CD4-positive, alpha-beta memory T cell (primary cell): ENCODE measurements at regions of chr1 and their contacts with region 1.

Region 1: GRCh38 chr1:114511032-114511785 is at the start of gene TRIM33:
- DNase-seq: peak; percentile 91 to 95 (median 94)
- H3K4me3 ChIP-seq: peak within 1 kb of the TSS; percentile 75 to 85
- H3K4me3 Mint-ChIP-seq: peak within 1 kb of the TSS; percentile 97 to 100 (median 98)
- H3K27ac ChIP-seq: peak within 1 kb of the TSS; percentile 96
- H3K27ac Mint-ChIP-seq: peak within 1 kb of the TSS; percentile 97 to 100 (median 100)
- H3K4me1 ChIP-seq: peaks cover 41% of the 10 kb centered on the region
- H3K4me1 Mint-ChIP-seq: peaks cover 38 to 55% (median 47%) of the 10 kb centered on the region in 4 donors
- H3K27me3 ChIP-seq: no peaks in the 10 kb centered on the region
- H3K27me3 Mint-ChIP-seq: no peaks in the 10 kb centered on the region
- total RNA-seq, gene TRIM33: 50.6 to 54.4 TPM

Region 2: DNA sequence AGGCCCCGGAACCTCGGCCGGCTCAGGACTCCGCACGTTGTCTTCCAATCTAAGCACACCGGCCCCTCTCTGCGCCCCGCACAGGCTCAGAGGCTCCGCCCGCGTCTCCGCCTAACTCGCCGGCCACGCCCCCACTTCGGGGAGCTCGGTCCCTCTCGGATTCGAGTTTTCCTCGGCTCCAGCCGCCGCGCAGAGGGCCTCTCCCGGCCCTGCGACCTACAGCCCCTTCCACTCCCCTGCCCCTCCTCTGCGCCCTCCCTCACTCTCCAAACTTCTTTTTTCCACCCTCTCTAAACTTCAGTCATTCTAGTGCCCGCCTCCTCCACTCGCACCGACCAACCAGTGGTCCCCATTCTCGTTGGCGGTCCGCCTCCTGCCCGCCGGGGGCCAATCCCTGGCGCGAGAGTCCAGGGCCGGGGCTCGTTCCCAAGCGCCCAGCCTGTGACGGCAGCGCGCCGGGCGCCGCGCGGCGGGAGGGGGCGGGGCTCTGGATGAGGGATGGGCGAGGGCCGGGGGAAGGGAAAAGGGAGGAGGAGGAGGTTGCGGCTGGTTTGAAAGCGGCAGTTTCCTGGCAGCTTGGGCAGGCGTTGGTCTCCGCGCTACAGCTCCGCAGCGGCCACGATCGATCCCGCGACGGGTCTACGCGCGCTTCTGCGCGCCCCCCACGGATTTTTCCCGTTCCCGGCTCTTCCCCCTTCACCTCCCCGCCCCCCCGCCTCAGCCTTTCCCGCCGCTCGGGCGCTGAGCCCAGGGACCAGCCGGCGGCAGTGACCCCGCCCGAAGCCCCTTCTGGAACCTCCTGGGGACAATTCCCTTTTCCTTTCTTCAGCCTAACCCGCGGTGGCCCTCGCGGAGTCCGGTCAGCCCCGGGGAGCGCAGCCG is 1121.0 kb before region 1 on chr1 and contains the start of gene MAGI3:
- CTCF ChIA-PET with region 1: no interaction called
- POLR2A ChIA-PET with region 1: no interaction called
- intact Hi-C with region 1: loop called (anchors 5 kb)
- DNase-seq: peak; percentile 92 to 94 (median 93)
- H3K4me3 ChIP-seq: peak within 1 kb of the TSS; percentile 44 to 89
- H3K4me3 Mint-ChIP-seq: peak within 1 kb of the TSS; percentile 88 to 98 (median 92)
- H3K27ac ChIP-seq: peak within 1 kb of the TSS; percentile 60
- H3K27ac Mint-ChIP-seq: peak within 1 kb of the TSS; percentile 80 to 95 (median 91)
- H3K4me1 ChIP-seq: peaks cover 30% of the 10 kb centered on the region
- H3K4me1 Mint-ChIP-seq: peaks cover 20 to 36% (median 23%) of the 10 kb centered on the region in 4 donors
- H3K27me3 ChIP-seq: no peaks in the 10 kb centered on the region
- H3K27me3 Mint-ChIP-seq: no peaks in the 10 kb centered on the region
- total RNA-seq, gene MAGI3: 6.5 to 6.7 TPM

Region 3: GRCh38 chr1:113904674-113905434 is 606.4 kb before region 1 on chr1 and contains the starts of genes AP4B1 and DCLRE1B:
- CTCF ChIA-PET with region 1: no interaction called
- POLR2A ChIA-PET with region 1: interaction called, 12 read pairs
- intact Hi-C with region 1: no loop called
- DNase-seq: peak; percentile 97 to 99 (median 98)
- H3K4me3 ChIP-seq: peak within 1 kb of the TSS; percentile 68 to 98
- H3K4me3 Mint-ChIP-seq: peak within 1 kb of the TSS; percentile 94 to 100 (median 99)
- H3K27ac ChIP-seq: peak within 1 kb of the TSS; percentile 96
- H3K27ac Mint-ChIP-seq: peak within 1 kb of the TSS; percentile 96 to 100 (median 100)
- H3K4me1 ChIP-seq: peaks cover 44% of the 10 kb centered on the region
- H3K4me1 Mint-ChIP-seq: peaks cover 36 to 74% (median 47%) of the 10 kb centered on the region in 4 donors
- H3K27me3 ChIP-seq: no peaks in the 10 kb centered on the region
- H3K27me3 Mint-ChIP-seq: no peaks in the 10 kb centered on the region
- total RNA-seq, gene AP4B1: 74.5 to 75.5 TPM
- total RNA-seq, gene DCLRE1B: 5.1 to 5.4 TPM

Region 4: DNA sequence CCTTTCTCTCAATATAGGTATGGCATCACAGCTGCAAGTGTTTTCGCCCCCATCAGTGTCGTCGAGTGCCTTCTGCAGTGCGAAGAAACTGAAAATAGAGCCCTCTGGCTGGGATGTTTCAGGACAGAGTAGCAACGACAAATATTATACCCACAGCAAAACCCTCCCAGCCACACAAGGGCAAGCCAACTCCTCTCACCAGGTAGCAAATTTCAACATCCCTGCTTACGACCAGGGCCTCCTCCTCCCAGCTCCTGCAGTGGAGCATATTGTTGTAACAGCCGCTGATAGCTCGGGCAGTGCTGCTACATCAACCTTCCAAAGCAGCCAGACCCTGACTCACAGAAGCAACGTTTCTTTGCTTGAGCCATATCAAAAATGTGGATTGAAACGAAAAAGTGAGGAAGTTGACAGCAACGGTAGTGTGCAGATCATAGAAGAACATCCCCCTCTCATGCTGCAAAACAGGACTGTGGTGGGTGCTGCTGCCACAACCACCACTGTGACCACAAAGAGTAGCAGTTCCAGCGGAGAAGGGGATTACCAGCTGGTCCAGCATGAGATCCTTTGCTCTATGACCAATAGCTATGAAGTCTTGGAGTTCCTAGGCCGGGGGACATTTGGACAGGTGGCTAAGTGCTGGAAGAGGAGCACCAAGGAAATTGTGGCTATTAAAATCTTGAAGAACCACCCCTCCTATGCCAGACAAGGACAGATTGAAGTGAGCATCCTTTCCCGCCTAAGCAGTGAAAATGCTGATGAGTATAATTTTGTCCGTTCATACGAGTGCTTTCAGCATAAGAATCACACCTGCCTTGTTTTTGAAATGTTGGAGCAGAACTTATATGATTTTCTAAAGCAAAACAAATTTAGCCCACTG is 570.6 kb before region 1 on chr1:
- CTCF ChIA-PET with region 1: no interaction called
- POLR2A ChIA-PET with region 1: no interaction called
- intact Hi-C with region 1: no loop called
- DNase-seq: peak; percentile 37 to 76 (median 47)
- H3K4me3 ChIP-seq: peak overlapping the region in 1 of 2 donors; percentile 35
- H3K4me3 Mint-ChIP-seq: peak overlapping the region; percentile 59 to 89 (median 82)
- H3K27ac ChIP-seq: peak overlapping the region; percentile 52
- H3K27ac Mint-ChIP-seq: peak overlapping the region; percentile 86 to 97 (median 91)
- H3K4me1 ChIP-seq: peaks cover 85% of the 10 kb centered on the region
- H3K4me1 Mint-ChIP-seq: peaks cover 56 to 85% (median 71%) of the 10 kb centered on the region in 4 donors
- H3K27me3 ChIP-seq: no peaks in the 10 kb centered on the region
- H3K27me3 Mint-ChIP-seq: no peaks in the 10 kb centered on the region

Region 5: GRCh38 chr1:114369927-114370326 is 141.3 kb before region 1 on chr1:
- CTCF ChIA-PET with region 1: no interaction called
- POLR2A ChIA-PET with region 1: no interaction called
- intact Hi-C with region 1: no loop called
- DNase-seq: no peak
- H3K4me3 ChIP-seq: no peak overlapping the region
- H3K4me3 Mint-ChIP-seq: no peak overlapping the region
- H3K27ac ChIP-seq: no peak overlapping the region
- H3K27ac Mint-ChIP-seq: no peak overlapping the region
- H3K4me1 ChIP-seq: no peaks in the 10 kb centered on the region
- H3K4me1 Mint-ChIP-seq: no peaks in the 10 kb centered on the region
- H3K27me3 ChIP-seq: no peaks in the 10 kb centered on the region
- H3K27me3 Mint-ChIP-seq: peaks cover 0 to 1% of the 10 kb centered on the region in 2 donors

Region 6: GRCh38 chr1:114482204-114482980 is 28.8 kb before region 1 on chr1:
- CTCF ChIA-PET with region 1: no interaction called
- POLR2A ChIA-PET with region 1: interaction called, 10 read pairs
- intact Hi-C with region 1: no loop called
- DNase-seq: peak in 4 of 5 donors; percentile 21 to 28 (median 26)
- H3K4me3 ChIP-seq: no peak overlapping the region
- H3K4me3 Mint-ChIP-seq: peak overlapping the region in 7 of 8 donors; percentile 15 to 72 (median 26)
- H3K27ac ChIP-seq: no peak overlapping the region
- H3K27ac Mint-ChIP-seq: peak overlapping the region; percentile 62 to 92 (median 82)
- H3K4me1 ChIP-seq: peaks cover 46% of the 10 kb centered on the region
- H3K4me1 Mint-ChIP-seq: peaks cover 41 to 68% (median 49%) of the 10 kb centered on the region in 4 donors
- H3K27me3 ChIP-seq: no peaks in the 10 kb centered on the region
- H3K27me3 Mint-ChIP-seq: no peaks in the 10 kb centered on the region

Region 7: DNA sequence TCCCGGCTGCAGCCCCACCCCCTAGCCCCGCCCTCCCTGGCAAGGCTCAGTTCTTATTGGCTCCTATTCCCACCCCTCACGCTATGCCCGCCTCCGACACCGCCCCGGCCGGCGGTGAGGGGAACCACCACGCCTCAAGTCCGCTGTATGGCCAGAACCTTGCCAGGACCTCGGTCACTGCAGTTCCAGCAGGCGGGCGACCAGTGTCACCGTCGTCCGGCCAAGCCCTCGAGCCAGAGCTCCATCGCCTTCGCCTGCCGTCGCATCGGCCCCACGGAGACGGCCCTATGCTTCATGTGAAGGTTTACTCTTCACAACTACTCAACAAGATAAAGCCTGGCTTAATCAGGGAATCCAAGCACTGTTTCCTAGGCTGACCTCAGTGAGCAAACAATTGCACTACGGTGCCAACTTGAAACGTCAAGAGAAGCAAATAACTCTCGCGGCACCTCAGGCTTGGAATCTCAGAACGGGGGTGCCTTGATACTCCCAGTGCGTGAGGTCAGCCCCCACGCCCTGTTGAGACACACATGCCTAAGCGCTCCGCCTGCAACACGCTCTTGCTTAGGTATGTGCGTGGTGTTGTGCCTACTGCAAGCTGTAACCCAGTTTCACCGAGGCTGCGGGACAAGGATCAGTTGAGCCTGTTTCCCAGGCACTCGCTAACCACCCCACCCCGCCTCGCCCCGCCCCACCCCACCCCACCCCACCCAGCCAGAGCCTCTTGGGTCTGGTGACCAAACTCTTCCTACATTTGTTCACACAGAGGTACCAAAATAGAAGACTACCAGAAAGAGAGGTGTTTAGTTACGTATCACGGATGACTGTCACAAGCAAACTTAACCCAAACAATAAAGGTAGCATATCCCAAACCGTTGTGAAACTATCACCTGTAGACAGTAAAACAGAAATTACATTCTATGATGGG is 159.1 kb after region 1 on chr1:
- CTCF ChIA-PET with region 1: no interaction called
- POLR2A ChIA-PET with region 1: no interaction called
- intact Hi-C with region 1: loop called (anchors 1 kb)
- DNase-seq: peak; percentile 76 to 87 (median 78)
- H3K4me3 ChIP-seq: peak overlapping the region; percentile 25 to 76
- H3K4me3 Mint-ChIP-seq: peak overlapping the region; percentile 94 to 98 (median 96)
- H3K27ac ChIP-seq: peak overlapping the region; percentile 49
- H3K27ac Mint-ChIP-seq: peak overlapping the region; percentile 81 to 95 (median 91)
- H3K4me1 ChIP-seq: peaks cover 7% of the 10 kb centered on the region
- H3K4me1 Mint-ChIP-seq: peaks cover 6 to 14% (median 10%) of the 10 kb centered on the region in 4 donors
- H3K27me3 ChIP-seq: no peaks in the 10 kb centered on the region
- H3K27me3 Mint-ChIP-seq: peaks cover 5 to 7% of the 10 kb centered on the region in 2 donors

Region 8: GRCh38 chr1:114685851-114686534 is 174.8 kb after region 1 on chr1:
- CTCF ChIA-PET with region 1: no interaction called
- POLR2A ChIA-PET with region 1: no interaction called
- intact Hi-C with region 1: no loop called
- DNase-seq: no peak
- H3K4me3 ChIP-seq: no peak overlapping the region
- H3K4me3 Mint-ChIP-seq: no peak overlapping the region
- H3K27ac ChIP-seq: no peak overlapping the region
- H3K27ac Mint-ChIP-seq: no peak overlapping the region
- H3K4me1 ChIP-seq: no peaks in the 10 kb centered on the region
- H3K4me1 Mint-ChIP-seq: no peaks in the 10 kb centered on the region
- H3K27me3 ChIP-seq: no peaks in the 10 kb centered on the region
- H3K27me3 Mint-ChIP-seq: peaks cover 24 to 33% of the 10 kb centered on the region in 2 donors

Region 9: DNA sequence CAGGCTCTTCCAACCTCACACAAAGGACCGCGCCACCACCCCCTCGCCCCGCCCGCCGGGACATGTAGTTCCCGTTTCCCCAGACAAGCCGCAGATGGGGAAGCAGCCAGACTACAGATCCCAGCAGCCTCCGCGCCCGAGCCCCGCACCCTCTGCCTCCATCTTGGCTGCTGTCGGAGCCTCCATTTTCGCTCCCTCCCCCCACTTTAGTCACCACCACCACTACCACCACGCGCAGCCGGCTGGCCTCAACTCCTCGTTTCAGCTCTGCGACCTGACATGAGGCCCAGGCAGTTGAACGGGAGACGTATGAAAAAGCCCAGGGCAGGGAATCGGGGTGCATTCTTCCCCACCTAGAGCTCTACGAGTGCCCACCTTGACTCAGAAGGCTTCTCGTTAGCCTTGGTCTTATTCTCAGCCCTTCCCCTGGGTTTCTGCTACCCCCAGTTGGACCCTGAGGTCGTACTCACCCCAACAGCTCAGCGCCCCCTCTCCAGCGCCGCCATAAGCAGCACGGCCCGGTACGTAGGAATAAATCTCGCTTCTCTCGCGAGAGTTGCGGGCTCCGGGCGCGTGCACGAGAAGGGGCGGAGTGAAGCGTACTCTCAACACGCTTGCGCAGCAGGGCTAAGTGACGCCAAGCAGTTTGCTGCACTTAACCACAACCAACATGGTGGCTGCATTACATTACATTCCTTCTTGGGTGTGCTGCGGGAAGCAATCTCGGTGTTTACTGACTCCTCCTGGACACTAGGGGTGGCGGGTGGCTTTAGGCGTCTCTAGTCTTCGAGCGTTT is 246.4 kb after region 1 on chr1 and contains the start of gene CSDE1:
- CTCF ChIA-PET with region 1: no interaction called
- POLR2A ChIA-PET with region 1: interaction called, 24 read pairs
- intact Hi-C with region 1: loop called (anchors 1 kb)
- DNase-seq: peak; percentile 96 to 98 (median 97)
- H3K4me3 ChIP-seq: peak within 1 kb of the TSS; percentile 97 to 99
- H3K4me3 Mint-ChIP-seq: peak within 1 kb of the TSS; percentile 97 to 100 (median 100)
- H3K27ac ChIP-seq: peak within 1 kb of the TSS; percentile 100
- H3K27ac Mint-ChIP-seq: peak within 1 kb of the TSS; percentile 100
- H3K4me1 ChIP-seq: peaks cover 52% of the 10 kb centered on the region
- H3K4me1 Mint-ChIP-seq: peaks cover 43 to 62% (median 49%) of the 10 kb centered on the region in 4 donors
- H3K27me3 ChIP-seq: no peaks in the 10 kb centered on the region
- H3K27me3 Mint-ChIP-seq: no peaks in the 10 kb centered on the region
- total RNA-seq, gene CSDE1: 530 to 559 TPM